Left cardiac atrium (tissue), 4 donors: ENCODE measurements at regions of chr2 and their contacts with region 1.

Region 1: DNA sequence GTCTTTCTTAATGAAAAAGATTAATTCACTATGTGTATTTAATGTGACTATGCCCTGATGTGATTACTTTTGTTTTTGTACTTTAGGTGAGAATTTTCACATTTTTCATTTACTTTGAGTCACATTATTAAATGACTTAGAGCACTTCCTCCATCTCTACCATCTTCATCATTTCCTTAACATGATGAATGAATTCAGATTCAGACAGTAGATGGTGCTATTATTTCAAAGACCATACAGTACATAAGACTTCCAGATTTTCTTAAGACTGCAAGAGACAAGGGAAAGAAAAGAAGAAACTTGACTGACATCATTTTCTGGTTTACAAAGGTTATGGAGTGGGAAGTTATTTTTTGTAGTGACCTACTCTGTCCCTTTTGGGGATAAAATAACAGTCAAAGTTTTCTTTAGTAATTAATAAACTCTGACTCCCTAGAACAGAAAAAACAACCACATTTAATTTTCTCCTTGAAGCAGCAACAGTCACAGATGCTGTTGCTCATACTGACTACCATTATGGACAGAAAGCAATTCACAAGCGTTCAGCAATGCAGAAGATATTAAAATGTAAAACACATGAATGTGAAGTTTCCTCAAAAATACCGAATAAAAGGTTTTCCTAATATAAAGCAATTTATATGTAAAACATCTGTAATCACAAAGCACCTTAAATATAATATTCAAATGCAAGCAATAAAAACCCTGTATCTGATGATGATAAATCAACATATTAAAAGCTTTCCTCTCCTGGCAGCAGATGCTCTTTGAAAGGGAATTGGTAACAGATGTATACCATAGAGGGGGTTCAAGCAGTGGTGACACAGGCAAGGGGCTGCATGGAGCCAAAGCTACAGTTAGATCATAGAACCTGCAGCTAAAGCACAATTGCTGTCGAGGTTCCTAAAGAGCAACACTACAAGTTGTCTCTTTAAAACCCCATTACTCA is 1010.9 kb upstream of the NXPH2 start:
- DNase-seq: no peak
- ATAC-seq: no peak

Region 2: GRCh38 chr2:140865837-140866236 is 1074.8 kb after region 1 on chr2:
- intact Hi-C with region 1: loop called in 1 of 2 experiments (anchors 5 kb)
- DNase-seq: no peak
- ATAC-seq: no peak